ENCODE measurements at regions of chr6 and their contacts with region 1.

Region 1: GRCh38 chr6:3742426-3743344 is 8.8 kb downstream of the PXDC1 start:
- DNase-seq: peak; percentile 31
- H3K4me3 ChIP-seq: peak overlapping the region in 2 of 4 donors; percentile 11 to 29
- H3K27ac ChIP-seq: peak overlapping the region; percentile 50 to 82 (median 76)
- H3K4me1 ChIP-seq: peaks cover 4 to 100% (median 63%) of the 10 kb centered on the region in 3 donors
- H3K27me3 ChIP-seq: no peaks in the 10 kb centered on the region
- CTCF ChIP-seq: peak; percentile 83 to 99 (median 96)
- POLR2A ChIP-seq: no peak

Region 2: DNA sequence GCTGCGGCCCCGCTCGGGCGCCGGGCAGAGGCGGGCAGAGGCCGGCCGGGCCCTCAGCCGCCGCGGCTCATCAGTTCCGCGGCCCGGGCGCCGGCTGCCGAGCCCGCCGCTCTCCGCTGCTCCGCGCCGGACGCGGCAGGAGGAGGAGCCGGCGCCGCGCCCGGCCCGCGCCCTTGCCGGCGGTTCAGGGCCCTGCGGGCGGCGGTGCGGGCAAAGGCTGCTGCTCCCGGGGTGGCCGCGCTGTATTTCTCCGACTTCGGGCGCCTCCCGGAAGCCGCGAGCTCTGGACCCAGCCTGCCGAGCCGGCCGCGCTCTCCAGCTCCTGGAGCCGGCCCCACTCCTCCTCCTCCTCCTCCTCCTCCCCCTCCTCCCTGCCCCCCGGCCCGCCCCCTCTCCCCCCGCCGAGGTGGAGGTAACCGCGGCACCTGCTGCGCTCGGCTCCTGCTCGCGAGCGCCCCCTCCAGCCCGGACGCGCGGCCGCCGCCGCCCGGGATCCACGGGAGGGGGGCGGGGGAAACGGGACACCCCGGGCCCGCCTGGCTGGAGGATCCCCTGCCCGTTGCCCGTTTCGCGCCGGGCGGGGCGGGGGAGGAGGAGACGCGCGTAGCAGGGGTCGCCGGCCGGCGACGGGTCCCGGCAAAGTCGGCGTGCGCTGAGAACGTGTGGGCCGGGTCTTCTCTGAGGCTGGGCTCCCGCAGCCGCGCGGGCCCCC is 285.8 kb before region 1 on chr6 and contains the start of gene SLC22A23:
- intact Hi-C with region 1: no loop called
- DNase-seq: no peak
- H3K4me3 ChIP-seq: peak within 1 kb of the TSS; percentile 74 to 86 (median 80)
- H3K27ac ChIP-seq: peak within 1 kb of the TSS; percentile 82 to 89 (median 84)
- H3K4me1 ChIP-seq: peaks cover 19 to 54% (median 21%) of the 10 kb centered on the region in 3 donors
- H3K27me3 ChIP-seq: no peaks in the 10 kb centered on the region
- CTCF ChIP-seq: peak; percentile 60 to 92 (median 79)
- POLR2A ChIP-seq: peak in 2 of 4 donors; percentile 29 to 55
- total RNA-seq, gene SLC22A23: 26.6 to 42.6 (median 37.6) TPM

Region 3: DNA sequence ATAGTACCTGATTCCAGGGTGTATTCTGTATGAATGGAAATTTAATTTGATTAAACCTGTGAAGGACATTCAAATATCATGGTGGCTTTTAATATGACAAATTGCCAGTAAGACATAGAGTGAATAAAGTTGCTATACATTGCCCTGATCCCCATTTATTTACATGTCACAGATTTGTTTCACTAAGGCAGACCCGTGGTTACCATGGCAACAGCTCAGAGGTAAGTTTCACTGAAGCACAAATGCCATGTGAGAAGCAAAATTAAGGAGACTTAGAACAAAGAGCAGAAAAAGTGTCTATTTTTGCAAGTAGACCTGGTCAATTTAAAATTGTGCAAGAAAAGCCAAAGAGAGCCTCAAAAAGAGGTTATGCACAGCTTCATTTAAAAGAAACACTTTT is 54.8 kb before region 1 on chr6:
- intact Hi-C with region 1: no loop called
- DNase-seq: no peak
- H3K4me3 ChIP-seq: no peak overlapping the region
- H3K27ac ChIP-seq: no peak overlapping the region
- H3K4me1 ChIP-seq: no peaks in the 10 kb centered on the region
- H3K27me3 ChIP-seq: no peaks in the 10 kb centered on the region
- CTCF ChIP-seq: no peak
- POLR2A ChIP-seq: no peak

Region 4: DNA sequence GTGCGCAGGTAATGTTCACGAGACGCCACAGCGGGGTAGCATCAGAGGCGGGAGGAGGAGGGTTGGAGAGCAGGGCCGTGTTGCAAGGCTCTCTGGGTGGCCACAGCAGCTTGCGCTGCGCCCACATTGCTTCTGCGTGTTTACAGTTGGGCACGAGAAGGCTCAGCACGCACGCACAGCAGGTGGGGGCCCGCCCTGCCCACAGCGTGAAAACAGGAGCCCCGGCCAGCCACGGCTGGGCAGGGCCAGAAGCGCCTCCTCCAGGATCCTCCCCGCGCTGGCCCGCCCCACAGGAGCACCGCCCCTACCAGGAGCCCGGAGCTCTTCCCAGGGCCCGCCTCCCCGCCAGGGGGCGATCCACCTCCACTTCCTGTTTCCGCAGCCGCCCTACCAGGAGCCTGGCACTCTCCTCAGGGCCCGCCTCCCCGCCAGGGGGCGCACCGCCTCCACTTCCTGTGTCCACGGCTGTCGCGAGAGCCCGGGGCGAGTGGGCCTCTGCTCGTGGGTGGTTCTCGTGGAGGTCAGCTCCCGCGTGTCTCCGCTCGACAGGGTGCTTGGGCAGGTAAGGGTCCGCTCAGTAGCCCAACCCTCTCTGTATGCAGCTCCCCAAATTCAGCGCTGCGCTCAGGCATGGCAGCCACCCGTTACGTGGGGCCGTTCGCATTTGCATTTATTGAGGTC is 106.4 kb after region 1 on chr6 and contains the start of gene FAM50B:
- intact Hi-C with region 1: loop called (anchors 10 kb)
- DNase-seq: peak; percentile 51
- H3K4me3 ChIP-seq: peak within 1 kb of the TSS; percentile 40 to 67 (median 58)
- H3K27ac ChIP-seq: peak within 1 kb of the TSS; percentile 73 to 88 (median 79)
- H3K4me1 ChIP-seq: peaks cover 0 to 38% (median 4%) of the 10 kb centered on the region in 3 donors
- H3K27me3 ChIP-seq: no peaks in the 10 kb centered on the region
- CTCF ChIP-seq: peak; percentile 84 to 99 (median 98)
- POLR2A ChIP-seq: peak in 1 of 4 donors; percentile 43
- total RNA-seq, gene FAM50B: 4.6 to 12.9 (median 11.8) TPM

Region 5: GRCh38 chr6:3887150-3887700 is 144.5 kb after region 1 on chr6:
- intact Hi-C with region 1: loop called (anchors 5 kb)
- DNase-seq: no peak
- H3K4me3 ChIP-seq: no peak overlapping the region
- H3K27ac ChIP-seq: no peak overlapping the region
- H3K4me1 ChIP-seq: peaks cover 0 to 26% (median 10%) of the 10 kb centered on the region in 3 donors
- H3K27me3 ChIP-seq: no peaks in the 10 kb centered on the region
- CTCF ChIP-seq: peak; percentile 19 to 58 (median 45)
- POLR2A ChIP-seq: no peak

Region 6: GRCh38 chr6:3929281-3929798 is 186.7 kb after region 1 on chr6:
- intact Hi-C with region 1: loop called (anchors 5 kb)
- DNase-seq: no peak
- H3K4me3 ChIP-seq: no peak overlapping the region
- H3K27ac ChIP-seq: peak overlapping the region in 1 of 4 donors; percentile 37
- H3K4me1 ChIP-seq: peaks cover 0 to 8% (median 0%) of the 10 kb centered on the region in 3 donors
- H3K27me3 ChIP-seq: peaks cover 0 to 6% (median 0%) of the 10 kb centered on the region in 4 donors
- CTCF ChIP-seq: no peak
- POLR2A ChIP-seq: no peak